Activated CD8-positive, alpha-beta T cell treated with anti-CD3 and anti-CD28 coated beads, Interleukin-2, amount 10 ng/mL, durations not matched to agents 7 days and 5 days (primary cell): ENCODE measurements at regions of chr1 and their contacts with region 1.

Region 1: GRCh38 chr1:119613769-119614720 is 34.0 kb downstream of the ZNF697 start:
- DNase-seq: peak; percentile 82
- ATAC-seq: peak; percentile 89
- H3K4me3 Mint-ChIP-seq: no peak overlapping the region
- H3K27ac Mint-ChIP-seq: no peak overlapping the region
- H3K4me1 Mint-ChIP-seq: no peaks in the 10 kb centered on the region
- H3K27me3 Mint-ChIP-seq: peaks cover 2% of the 10 kb centered on the region

Region 2: GRCh38 chr1:119286587-119287181 is 327.4 kb before region 1 on chr1:
- CTCF ChIA-PET with region 1: no interaction called
- POLR2A ChIA-PET with region 1: no interaction called
- DNase-seq: peak; percentile 48
- ATAC-seq: peak; percentile 58
- H3K4me3 Mint-ChIP-seq: no peak overlapping the region
- H3K27ac Mint-ChIP-seq: no peak overlapping the region
- H3K4me1 Mint-ChIP-seq: no peaks in the 10 kb centered on the region
- H3K27me3 Mint-ChIP-seq: peaks cover 29% of the 10 kb centered on the region

Region 3: DNA sequence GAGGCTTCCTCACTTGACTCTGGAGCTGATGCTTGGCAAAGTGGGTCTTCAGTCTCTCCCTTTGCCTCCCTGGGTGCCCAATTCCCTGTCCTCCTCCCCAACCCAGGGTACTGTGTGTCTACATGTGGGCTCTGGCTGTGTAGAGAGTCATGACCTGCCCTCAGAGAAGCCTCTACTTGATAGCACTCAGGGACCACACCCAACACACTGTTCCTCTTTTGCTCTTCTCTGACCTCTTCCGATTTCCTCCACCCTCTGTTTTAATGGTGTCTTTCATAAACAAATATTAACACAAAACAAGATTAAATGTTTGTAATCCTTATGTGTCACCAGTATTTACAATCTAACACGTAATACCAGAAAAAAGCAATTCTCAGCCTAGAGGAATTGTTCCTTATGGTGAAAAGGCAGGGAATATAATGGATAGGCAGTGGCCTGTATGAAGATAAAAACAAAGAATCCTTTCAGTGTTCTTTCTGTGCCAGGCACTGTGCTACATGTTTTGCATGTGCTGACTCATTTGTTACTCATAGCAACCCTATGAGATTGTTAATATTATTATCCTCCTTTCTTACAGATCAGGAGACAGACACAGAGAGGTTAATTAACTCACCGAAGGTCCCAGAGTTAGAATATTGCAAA is 48.8 kb before region 1 on chr1:
- CTCF ChIA-PET with region 1: no interaction called
- POLR2A ChIA-PET with region 1: no interaction called
- DNase-seq: no peak
- ATAC-seq: no peak
- H3K4me3 Mint-ChIP-seq: no peak overlapping the region
- H3K27ac Mint-ChIP-seq: no peak overlapping the region
- H3K4me1 Mint-ChIP-seq: no peaks in the 10 kb centered on the region
- H3K27me3 Mint-ChIP-seq: peaks cover 5% of the 10 kb centered on the region

Region 4: DNA sequence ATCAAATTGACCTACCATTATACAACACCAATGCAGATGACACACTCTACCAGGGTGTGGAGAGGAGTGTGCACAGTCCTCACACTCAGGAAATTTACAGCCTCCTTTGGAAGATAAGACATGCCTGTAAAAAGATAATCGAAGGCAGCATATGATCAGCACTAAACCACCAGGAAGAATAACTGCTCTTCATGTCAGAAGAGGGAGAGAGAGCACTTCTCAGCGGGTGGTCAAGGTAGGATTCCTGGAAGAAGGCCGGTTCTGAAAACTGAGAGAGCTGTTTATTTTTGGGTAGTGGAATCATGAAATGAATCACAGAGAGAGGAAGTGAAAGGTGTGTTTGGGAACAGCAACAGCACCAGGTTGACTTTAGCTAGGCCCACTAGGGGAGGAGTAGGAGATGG is 48.0 kb after region 1 on chr1:
- CTCF ChIA-PET with region 1: interaction called, 10 read pairs
- POLR2A ChIA-PET with region 1: no interaction called
- DNase-seq: no peak
- ATAC-seq: no peak
- H3K4me3 Mint-ChIP-seq: no peak overlapping the region
- H3K27ac Mint-ChIP-seq: no peak overlapping the region
- H3K4me1 Mint-ChIP-seq: peaks cover 3% of the 10 kb centered on the region
- H3K27me3 Mint-ChIP-seq: peaks cover 29% of the 10 kb centered on the region